A673 (cell line): ENCODE measurements at regions of chr15 and their contacts with region 1.

Region 1: DNA sequence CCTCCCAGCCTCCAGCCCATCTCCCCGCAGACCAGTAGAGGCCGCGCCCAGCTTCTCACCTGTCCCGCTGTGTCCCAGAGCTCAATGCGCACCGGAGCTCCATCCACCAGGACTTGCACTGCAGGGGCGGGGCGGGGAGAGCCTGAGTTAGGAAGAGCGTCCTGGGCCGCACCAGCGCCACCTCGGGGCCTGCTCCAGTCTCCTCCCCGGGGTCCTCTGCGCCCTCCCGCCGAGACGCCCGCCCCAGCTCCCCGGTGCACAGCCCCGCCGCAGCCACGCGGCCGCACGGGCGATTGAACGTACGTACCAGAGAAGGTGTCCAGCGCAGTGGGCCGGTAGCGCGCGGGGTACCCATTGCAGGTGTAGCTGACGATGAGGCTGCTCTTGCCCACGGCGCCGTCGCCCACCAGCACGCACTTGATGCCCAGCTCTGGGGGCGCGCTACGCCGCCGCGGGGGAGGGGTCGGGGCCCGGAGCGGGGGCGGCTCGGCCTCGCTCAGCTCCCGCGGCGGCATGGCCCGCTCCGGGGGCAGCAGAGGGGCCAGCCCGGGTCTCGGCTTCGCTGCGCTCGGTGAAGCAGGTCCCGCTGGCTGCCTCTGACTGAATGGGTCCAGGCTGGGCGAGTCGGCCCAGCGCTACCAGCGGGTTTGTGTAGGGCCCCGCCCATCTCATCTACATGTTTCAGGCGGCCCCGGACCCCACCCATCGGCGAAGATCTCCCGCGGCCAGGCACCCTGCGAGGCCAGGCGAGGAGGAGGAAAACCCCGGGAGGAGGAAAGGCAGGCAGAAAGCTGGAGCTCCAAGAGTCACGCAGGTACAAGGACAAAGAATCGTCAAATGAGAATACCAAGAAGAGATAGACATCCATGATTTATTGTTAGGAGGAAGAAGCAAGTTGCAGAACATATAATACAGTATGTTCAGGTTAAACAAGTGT is at the start of gene RHOV:
- DNase-seq: peak; percentile 84
- H3K4me3 ChIP-seq: peak within 1 kb of the TSS; percentile 72
- H3K27ac ChIP-seq: peak within 1 kb of the TSS; percentile 48
- H3K4me1 ChIP-seq: peaks cover 4% of the 10 kb centered on the region
- H3K27me3 ChIP-seq: no peaks in the 10 kb centered on the region
- CTCF ChIP-seq: peak; percentile 64
- total RNA-seq, gene RHOV: 1.6 TPM in 2 replicates

Region 2: GRCh38 chr15:40338041-40338657 is 535.7 kb before region 1 on chr15:
- CTCF ChIA-PET with region 1: no interaction called
- POLR2A ChIA-PET with region 1: interaction called, 13 read pairs
- intact Hi-C with region 1: no loop called
- DNase-seq: peak; percentile 90
- H3K4me3 ChIP-seq: no peak overlapping the region
- H3K27ac ChIP-seq: peak overlapping the region; percentile 87
- H3K4me1 ChIP-seq: peaks cover 77% of the 10 kb centered on the region
- H3K27me3 ChIP-seq: no peaks in the 10 kb centered on the region
- CTCF ChIP-seq: peak; percentile 93

Region 3: GRCh38 chr15:40999190-40999589 is 125.3 kb after region 1 on chr15:
- CTCF ChIA-PET with region 1: interaction called, 10 read pairs
- POLR2A ChIA-PET with region 1: no interaction called
- intact Hi-C with region 1: no loop called
- DNase-seq: no peak
- H3K4me3 ChIP-seq: no peak overlapping the region
- H3K27ac ChIP-seq: no peak overlapping the region
- H3K4me1 ChIP-seq: no peaks in the 10 kb centered on the region
- H3K27me3 ChIP-seq: no peaks in the 10 kb centered on the region
- CTCF ChIP-seq: no peak